H1 (cell line): ENCODE measurements at regions of chr7 and their contacts with region 1.

Region 1: GRCh38 chr7:108603656-108604306 is 34.1 kb downstream of the DNAJB9 start:
- DNase-seq: no peak
- H3K4me3 ChIP-seq: no peak overlapping the region
- H3K27ac ChIP-seq: no peak overlapping the region
- H3K4me1 ChIP-seq: peaks cover 0 to 1% (median 0%) of the 10 kb centered on the region in 4 experiments; a peak in 2 of 7 replicates
- H3K27me3 ChIP-seq: no peaks in the 10 kb centered on the region
- CTCF ChIP-seq: no peak
- EP300 ChIP-seq: no peak
- POLR2A ChIP-seq: no peak
- RAD21 ChIP-seq: no peak

Region 2: DNA sequence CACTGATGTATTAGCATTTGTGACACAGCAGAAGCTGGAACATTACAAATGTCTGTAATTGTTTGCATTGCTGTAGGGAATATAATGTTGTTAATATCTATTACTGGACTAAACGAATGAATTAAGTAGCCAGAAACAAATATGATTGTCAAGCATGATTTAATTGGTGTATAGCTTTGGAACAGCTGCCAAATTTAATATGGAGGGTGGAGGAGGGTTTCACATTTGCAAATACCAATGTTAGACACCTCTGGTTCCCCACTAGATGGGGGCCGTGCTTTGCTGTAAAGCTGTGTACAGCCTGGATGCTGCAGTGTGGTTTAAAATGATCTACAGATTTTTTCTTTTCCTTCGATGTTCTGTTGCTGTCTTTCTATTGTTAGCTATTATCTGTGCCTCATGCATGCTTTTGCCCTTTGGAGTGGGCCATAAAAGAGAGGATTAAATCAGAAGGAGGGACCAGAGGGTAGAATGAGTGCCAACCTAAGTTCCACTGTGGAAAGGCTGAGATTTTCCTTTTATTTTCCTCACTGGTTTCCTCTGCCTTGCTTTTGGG is 11.1 kb before region 1 on chr7:
- CTCF ChIA-PET with region 1: interaction called, 11 read pairs
- POLR2A ChIA-PET with region 1: no interaction called
- DNase-seq: no peak
- H3K4me3 ChIP-seq: no peak overlapping the region
- H3K27ac ChIP-seq: no peak overlapping the region
- H3K4me1 ChIP-seq: peaks cover 0 to 8% (median 3%) of the 10 kb centered on the region in 4 experiments; a peak in 4 of 7 replicates
- H3K27me3 ChIP-seq: no peaks in the 10 kb centered on the region
- CTCF ChIP-seq: peak in 1 of 3 experiments; percentile 21; a peak in 1 of 4 replicates
- EP300 ChIP-seq: no peak
- POLR2A ChIP-seq: no peak
- RAD21 ChIP-seq: peak; percentile 47 to 55

Region 3: DNA sequence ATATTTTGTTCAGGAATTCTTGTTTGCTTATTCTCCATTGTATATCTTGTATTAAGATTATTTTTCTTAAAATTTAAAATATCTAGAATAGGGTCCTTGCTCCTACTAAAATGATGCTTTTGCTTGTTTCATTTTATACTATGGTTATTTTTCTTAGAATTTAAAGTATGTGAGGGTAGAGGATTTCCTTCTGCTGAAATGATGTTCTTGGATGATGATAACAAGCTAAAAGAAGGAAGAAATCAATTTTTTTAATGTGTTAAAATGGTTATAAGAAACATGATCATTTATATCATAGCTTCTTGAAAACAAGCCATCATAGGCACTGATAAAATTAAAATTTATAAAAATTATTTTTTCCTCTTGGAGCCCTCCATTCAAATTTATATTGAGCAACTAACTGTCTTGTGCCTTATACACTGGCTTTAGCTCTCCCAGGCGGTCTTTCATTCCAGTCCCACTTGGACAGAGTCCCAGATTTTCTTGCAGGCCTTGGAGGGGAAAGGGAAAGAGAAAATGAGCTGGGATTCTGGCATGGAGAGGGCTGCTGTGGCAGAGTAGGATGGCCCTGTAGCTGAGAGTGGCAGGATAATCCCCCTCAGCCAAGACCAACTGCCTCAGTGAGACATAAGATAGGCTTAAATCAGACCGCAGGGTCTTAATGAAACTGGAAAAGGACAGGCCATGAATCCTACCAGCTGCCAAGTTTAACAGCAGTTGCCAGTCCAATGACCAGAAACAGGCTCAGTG is 26.0 kb after region 1 on chr7:
- CTCF ChIA-PET with region 1: no interaction called
- POLR2A ChIA-PET with region 1: no interaction called
- DNase-seq: no peak
- H3K4me3 ChIP-seq: no peak overlapping the region
- H3K27ac ChIP-seq: no peak overlapping the region
- H3K4me1 ChIP-seq: no peaks in the 10 kb centered on the region
- H3K27me3 ChIP-seq: peaks cover 0 to 1% (median 0%) of the 10 kb centered on the region in 4 experiments; a peak in 1 of 7 replicates
- CTCF ChIP-seq: no peak
- EP300 ChIP-seq: no peak
- POLR2A ChIP-seq: no peak
- RAD21 ChIP-seq: no peak